MCF 10A (cell line): ENCODE measurements at regions of chrX and their contacts with region 1.

Region 1: DNA sequence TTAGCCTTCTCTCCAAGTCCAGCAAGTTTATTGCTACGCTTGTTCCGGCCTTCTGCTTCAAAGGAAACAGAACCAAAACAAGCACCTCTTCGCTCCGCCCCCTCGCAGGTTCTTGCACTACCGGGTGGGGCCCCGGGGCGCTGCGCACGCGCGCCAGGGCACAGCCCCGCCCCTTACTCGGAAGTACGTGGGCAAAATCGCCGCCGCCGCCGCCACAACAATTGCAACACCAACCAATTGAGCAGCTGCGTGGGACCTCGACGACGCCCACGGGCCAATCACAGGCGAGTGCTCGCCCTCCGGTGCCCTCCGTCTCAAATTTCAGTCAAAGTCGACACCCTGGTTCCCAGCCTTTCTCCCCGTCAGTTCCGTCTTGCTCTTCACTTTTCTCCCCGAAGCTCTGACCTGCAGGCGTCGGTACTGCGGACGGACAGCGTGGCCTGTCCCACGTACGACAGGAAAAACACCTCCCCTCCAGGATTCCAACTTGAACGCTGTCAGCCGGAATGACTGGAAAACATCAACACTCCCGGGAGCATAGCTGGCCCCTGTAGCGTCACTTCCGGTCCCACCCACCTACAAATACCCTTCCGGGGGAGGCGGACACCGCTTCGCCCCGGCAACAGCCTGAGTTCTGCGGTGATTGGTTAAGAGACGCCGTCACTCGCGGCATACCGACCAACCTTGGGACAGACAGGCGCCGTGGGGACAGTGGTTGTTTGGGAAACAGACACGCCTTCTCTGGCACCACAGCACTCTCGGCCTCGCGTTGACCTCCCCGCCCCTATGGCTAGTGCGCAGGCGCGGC is 624 bp upstream of the OTUD5 start:
- DNase-seq: peak; percentile 94
- H3K4me3 Mint-ChIP-seq: peak overlapping the region; percentile 94
- H3K27ac Mint-ChIP-seq: peak overlapping the region; percentile 100
- H3K4me1 Mint-ChIP-seq: peaks cover 5% of the 10 kb centered on the region
- H3K27me3 Mint-ChIP-seq: no peaks in the 10 kb centered on the region
- CTCF ChIP-seq: no peak

Region 2: GRCh38 chrX:48897621-48898306 is 60.3 kb before region 1 on chrX and contains the starts of genes PQBP1 and TIMM17B:
- CTCF ChIA-PET with region 1: no interaction called
- POLR2A ChIA-PET with region 1: interaction called, 15 read pairs
- intact Hi-C with region 1: no loop called
- DNase-seq: peak; percentile 95
- H3K4me3 Mint-ChIP-seq: peak within 1 kb of the TSS; percentile 82
- H3K27ac Mint-ChIP-seq: peak within 1 kb of the TSS; percentile 96
- H3K4me1 Mint-ChIP-seq: no peaks in the 10 kb centered on the region
- H3K27me3 Mint-ChIP-seq: no peaks in the 10 kb centered on the region
- CTCF ChIP-seq: no peak
- total RNA-seq, gene PQBP1: 126 and 150 TPM in 2 replicates
- total RNA-seq, gene TIMM17B: 70.6 and 73.7 TPM in 2 replicates

Region 3: DNA sequence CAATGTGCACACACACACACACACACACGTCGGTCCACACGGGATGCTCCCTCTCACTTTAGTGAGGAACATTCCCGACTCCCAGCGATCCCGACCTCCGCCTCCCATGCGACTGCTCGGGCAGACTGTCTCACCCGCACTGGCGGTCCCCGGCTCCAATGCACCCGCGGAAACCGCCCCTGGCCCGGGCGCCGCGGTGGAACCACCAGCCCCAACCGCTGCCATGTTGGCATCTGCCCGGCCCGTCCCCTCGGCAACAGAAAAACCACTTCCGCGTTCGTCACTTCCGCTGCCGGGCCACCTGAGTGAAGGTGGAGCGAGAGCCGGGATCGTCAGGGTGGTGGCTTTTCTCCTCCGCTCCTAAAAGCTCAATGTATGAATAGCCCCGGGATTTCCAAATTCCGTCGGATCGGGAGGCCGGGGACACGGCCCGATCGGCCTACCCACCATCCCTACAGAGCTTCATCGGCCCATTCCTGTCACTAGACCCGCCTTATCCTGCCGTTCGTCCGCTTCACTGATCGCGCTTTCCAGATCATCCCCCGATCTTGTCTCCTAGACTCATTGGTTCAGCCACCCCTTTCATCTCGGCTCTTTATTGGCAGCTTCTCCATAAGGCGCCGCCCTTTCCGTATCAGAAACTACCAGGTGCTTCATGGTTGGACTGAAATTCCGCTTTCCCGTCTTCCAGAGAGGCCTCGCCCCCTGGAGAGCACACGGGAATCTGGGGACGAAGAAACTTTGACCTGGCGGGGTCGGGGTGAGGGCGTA is 46.4 kb before region 1 on chrX and contains the start of gene SLC35A2:
- CTCF ChIA-PET with region 1: interaction called, 3 read pairs
- POLR2A ChIA-PET with region 1: interaction called, 13 read pairs
- intact Hi-C with region 1: no loop called
- DNase-seq: peak; percentile 79
- H3K4me3 Mint-ChIP-seq: peak within 1 kb of the TSS; percentile 91
- H3K27ac Mint-ChIP-seq: peak within 1 kb of the TSS; percentile 99
- H3K4me1 Mint-ChIP-seq: peaks cover 17% of the 10 kb centered on the region
- H3K27me3 Mint-ChIP-seq: no peaks in the 10 kb centered on the region
- CTCF ChIP-seq: no peak
- total RNA-seq, gene SLC35A2: 38.6 and 43.5 TPM in 2 replicates

Region 4: GRCh38 chrX:48917139-48918001 is 40.7 kb before region 1 on chrX:
- CTCF ChIA-PET with region 1: interaction called, 3 read pairs
- POLR2A ChIA-PET with region 1: interaction called, 13 read pairs
- intact Hi-C with region 1: loop called (anchors 2 kb)
- DNase-seq: peak; percentile 88
- H3K4me3 Mint-ChIP-seq: peak overlapping the region; percentile 94
- H3K27ac Mint-ChIP-seq: peak overlapping the region; percentile 96
- H3K4me1 Mint-ChIP-seq: peaks cover 18% of the 10 kb centered on the region
- H3K27me3 Mint-ChIP-seq: no peaks in the 10 kb centered on the region
- CTCF ChIP-seq: peak; percentile 75

Region 5: DNA sequence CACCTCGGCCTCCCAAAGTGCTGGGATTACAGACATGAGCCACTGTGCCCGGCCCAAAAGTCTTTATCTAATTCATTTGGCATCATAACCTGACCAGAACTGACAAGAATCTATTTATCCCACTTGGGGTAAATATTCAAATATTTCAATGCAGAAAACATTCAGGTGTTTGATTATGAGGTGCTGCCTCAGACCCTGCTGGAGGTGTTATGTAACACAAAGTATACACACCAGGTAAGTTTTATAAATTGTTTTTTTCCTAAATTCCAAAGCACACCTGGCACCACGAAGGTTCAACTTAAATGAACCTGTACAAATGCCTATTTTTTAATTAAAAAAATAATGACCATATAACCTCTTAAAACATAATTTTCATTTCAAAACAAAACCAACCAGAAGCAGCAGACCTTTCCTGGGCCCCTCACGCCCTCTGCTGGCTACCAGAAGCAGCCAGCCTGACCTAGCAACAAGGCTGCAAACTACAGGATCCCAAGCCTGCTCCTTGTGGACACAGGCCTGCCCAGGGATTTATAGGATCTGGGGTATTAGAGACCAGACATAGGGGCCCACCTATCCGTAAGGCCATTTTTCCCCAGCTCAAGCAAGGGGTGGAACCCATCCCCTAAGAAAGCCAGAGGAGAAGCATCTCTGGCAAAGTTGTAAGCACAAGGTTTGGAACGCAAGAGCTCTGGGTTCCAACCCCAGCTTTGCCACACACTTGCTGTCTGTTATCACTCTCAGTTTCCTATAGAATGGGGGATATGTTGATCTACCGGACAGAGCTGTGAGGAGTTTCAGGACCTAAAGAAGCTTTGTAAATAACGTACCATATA is 12.3 kb before region 1 on chrX:
- CTCF ChIA-PET with region 1: interaction called, 15 read pairs
- POLR2A ChIA-PET with region 1: interaction called, 4 read pairs
- intact Hi-C with region 1: no loop called
- DNase-seq: peak; percentile 47
- H3K4me3 Mint-ChIP-seq: no peak overlapping the region
- H3K27ac Mint-ChIP-seq: no peak overlapping the region
- H3K4me1 Mint-ChIP-seq: no peaks in the 10 kb centered on the region
- H3K27me3 Mint-ChIP-seq: no peaks in the 10 kb centered on the region
- CTCF ChIP-seq: peak; percentile 55

Region 6: GRCh38 chrX:49002091-49002935 is 44.3 kb after region 1 on chrX and contains the start of gene GRIPAP1:
- CTCF ChIA-PET with region 1: no interaction called
- POLR2A ChIA-PET with region 1: interaction called, 15 read pairs
- intact Hi-C with region 1: no loop called
- DNase-seq: peak; percentile 80
- H3K4me3 Mint-ChIP-seq: peak within 1 kb of the TSS; percentile 95
- H3K27ac Mint-ChIP-seq: peak within 1 kb of the TSS; percentile 97
- H3K4me1 Mint-ChIP-seq: peaks cover 10% of the 10 kb centered on the region
- H3K27me3 Mint-ChIP-seq: no peaks in the 10 kb centered on the region
- CTCF ChIP-seq: no peak
- total RNA-seq, gene GRIPAP1: 49.6 and 51.0 TPM in 2 replicates

Region 7: DNA sequence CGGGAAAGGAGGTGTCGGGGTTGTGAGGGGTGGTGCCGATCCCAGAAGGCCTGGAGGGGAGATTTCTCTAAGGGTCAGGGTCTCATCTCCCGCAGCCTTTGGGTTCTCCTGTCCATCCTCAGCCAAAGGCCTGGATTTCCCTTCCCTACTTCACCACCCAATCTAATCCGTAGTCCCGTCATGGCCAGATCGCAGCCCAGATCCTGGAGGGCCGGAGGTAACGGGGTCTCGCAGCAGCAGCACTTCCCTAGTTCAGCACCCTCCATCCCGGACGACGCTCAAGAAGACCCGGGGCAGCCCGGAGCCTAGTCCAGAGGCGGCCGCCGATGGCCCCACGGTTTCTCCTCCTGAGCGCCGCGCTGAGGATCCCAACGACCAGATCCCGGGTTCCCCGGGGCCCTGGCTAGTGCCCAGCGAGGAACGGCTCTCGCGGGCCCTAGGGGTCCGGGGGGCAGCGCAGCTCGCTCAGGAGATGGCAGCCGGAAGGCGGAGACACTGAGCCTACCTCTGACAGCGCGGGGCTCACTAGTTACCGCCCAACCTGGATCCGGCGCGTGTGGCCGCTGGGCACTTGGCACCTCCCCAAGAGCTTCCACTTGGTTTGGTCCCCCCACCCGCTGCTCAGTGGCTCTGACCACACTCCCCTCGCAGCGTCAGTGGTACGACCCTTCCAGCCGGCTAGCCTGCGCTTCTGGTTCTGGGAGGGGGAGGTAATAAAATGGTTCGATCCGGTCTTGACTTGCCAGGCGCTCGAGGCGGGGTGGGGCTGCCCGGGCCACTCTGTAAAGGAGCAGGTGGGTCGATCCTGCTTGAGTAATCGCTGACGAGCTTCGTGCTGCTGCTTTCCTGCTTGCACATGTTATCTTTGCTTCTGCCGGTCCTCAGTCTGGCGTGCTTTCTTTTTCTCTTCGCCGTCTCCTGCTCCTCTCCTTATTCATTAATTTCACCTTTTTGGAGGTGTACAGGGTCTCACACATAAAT is 208.2 kb after region 1 on chrX:
- CTCF ChIA-PET with region 1: no interaction called
- POLR2A ChIA-PET with region 1: interaction called, 11 read pairs
- intact Hi-C with region 1: no loop called
- DNase-seq: peak; percentile 88
- H3K4me3 Mint-ChIP-seq: peak overlapping the region; percentile 91
- H3K27ac Mint-ChIP-seq: peak overlapping the region; percentile 97
- H3K4me1 Mint-ChIP-seq: peaks cover 13% of the 10 kb centered on the region
- H3K27me3 Mint-ChIP-seq: no peaks in the 10 kb centered on the region
- CTCF ChIP-seq: peak; percentile 21

Region 8: GRCh38 chrX:49637686-49638085 is 679.7 kb after region 1 on chrX:
- CTCF ChIA-PET with region 1: no interaction called
- POLR2A ChIA-PET with region 1: no interaction called
- intact Hi-C with region 1: no loop called
- DNase-seq: no peak
- H3K4me3 Mint-ChIP-seq: no peak overlapping the region
- H3K27ac Mint-ChIP-seq: no peak overlapping the region
- H3K4me1 Mint-ChIP-seq: no peaks in the 10 kb centered on the region
- H3K27me3 Mint-ChIP-seq: no peaks in the 10 kb centered on the region
- CTCF ChIP-seq: no peak